BJ (cell line): ENCODE measurements at regions of chr7 and their contacts with region 1.

Region 1: DNA sequence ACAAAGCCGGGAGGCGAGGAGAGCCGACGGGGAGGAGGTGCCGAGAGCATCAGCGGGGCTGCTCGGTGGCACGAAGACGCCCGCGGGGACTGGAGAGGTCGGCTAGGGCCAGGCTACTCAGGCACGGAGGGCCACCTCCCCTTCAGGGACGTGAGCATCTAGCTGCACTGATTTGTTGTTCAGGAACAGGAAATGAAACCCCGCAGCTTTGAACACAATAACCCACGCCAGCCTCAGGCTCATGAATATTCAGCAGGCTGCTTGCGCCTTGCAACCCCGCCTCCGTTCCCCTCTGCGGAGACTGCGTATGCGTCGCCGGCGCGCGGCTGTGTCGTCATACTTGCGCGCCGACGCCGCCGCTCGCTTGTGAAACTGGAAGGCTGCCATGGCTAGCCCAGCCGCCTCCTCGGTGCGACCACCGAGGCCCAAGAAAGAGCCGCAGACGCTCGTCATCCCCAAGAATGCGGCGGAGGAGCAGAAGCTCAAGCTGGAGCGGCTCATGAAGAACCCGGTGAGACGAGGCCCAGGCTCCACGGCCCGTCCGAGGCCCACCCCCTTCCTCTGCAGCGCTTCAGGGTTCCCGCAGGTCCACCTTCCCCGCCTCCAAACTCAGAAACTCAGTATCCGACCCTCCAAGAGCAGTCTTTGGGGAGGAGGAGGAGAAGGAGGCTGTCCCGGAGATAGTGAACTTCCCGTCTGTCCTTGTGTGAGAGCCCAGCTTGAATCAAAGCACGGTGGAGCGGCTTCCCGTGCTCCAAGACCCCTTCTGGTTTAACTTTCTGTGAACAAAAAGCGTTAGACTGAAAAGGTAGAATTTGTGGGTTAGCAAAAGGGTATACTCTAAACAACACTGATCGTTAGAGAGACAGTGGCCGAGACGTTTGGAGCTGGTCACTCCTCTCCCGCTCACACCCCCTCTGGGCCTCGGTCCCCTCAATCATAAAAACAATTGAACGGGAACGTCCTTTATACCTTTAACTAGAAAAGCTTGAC is at the start of gene PRKRIP1:
- DNase-seq: peak; percentile 65
- H3K4me3 ChIP-seq: peak within 1 kb of the TSS; percentile 85
- H3K27me3 ChIP-seq: no peaks in the 10 kb centered on the region
- CTCF ChIP-seq: no peak
- polyA plus RNA-seq, gene PRKRIP1: 11.9 and 14.3 TPM in 2 replicates

Region 2: GRCh38 chr7:102279537-102280400 is 116.6 kb before region 1 on chr7:
- CTCF ChIA-PET with region 1: interaction called, 43 read pairs
- POLR2A ChIA-PET with region 1: no interaction called
- DNase-seq: no peak
- H3K4me3 ChIP-seq: no peak overlapping the region
- H3K27me3 ChIP-seq: no peaks in the 10 kb centered on the region
- CTCF ChIP-seq: peak; percentile 91